Activated CD4-positive, alpha-beta memory T cell treated with anti-CD3 and anti-CD28 coated beads, Interleukin-2, amount 10 ng/mL, durations not matched to agents 7 days and 5 days (primary cell): ENCODE measurements at regions of chr5 and their contacts with region 1.

Region 1: GRCh38 chr5:157582731-157583620 is 7.4 kb upstream of the ADAM19 start:
- DNase-seq: no peak
- H3K4me3 Mint-ChIP-seq: peak overlapping the region; percentile 30
- H3K27ac Mint-ChIP-seq: peak overlapping the region; percentile 67
- H3K4me1 Mint-ChIP-seq: peaks cover 53% of the 10 kb centered on the region
- H3K27me3 Mint-ChIP-seq: no peaks in the 10 kb centered on the region

Region 2: DNA sequence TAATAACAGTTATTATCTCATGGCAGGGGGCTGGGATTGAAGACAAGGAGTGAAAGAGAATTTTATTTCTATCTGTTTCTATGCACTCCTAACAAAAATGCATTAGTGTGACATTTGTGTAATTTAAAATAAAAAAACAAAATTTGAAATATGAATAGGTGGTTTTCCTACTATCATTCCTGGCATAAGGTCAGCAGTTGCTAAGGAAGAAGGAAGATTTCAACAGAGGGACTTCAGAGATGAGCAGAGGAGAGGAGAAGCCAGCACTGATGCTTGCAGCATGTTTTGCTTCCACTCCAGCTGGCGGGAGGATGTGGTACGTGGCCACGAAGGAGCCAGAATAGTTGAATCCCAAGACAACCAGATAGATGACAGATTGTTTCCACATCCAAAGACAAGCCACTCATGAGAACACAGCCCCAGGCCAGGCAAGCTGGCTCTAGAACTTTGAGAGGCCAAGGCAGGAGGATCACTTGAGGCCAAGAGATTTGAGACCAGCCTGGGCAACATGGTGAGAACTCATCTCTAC is 635.1 kb before region 1 on chr5:
- CTCF ChIA-PET with region 1: no interaction called
- POLR2A ChIA-PET with region 1: no interaction called
- DNase-seq: peak; percentile 66
- H3K4me3 Mint-ChIP-seq: no peak overlapping the region
- H3K27ac Mint-ChIP-seq: no peak overlapping the region
- H3K4me1 Mint-ChIP-seq: peaks cover 20% of the 10 kb centered on the region
- H3K27me3 Mint-ChIP-seq: peaks cover 2% of the 10 kb centered on the region

Region 3: DNA sequence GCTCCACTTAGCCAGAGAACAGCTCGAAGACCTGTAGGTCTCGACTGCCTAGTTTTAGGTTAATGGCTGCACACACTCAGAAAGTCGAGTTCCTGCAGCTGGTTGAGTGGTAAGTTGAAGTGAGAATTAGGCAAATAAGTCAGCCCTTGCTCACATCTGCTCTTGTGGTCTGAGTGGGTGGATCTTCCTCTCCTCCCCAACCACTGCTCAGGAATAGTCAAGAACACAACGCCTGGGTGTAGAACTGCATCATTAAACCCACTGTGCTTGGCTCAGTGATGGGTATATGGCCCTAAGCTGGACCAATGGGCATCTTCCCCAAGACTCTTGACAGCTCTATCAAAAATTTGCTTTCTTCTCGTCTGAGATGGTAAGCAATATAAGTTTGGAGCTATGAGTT is 13.5 kb after region 1 on chr5:
- CTCF ChIA-PET with region 1: interaction called, 11 read pairs
- POLR2A ChIA-PET with region 1: interaction called, 80 read pairs
- DNase-seq: peak; percentile 72
- H3K4me3 Mint-ChIP-seq: peak overlapping the region; percentile 23
- H3K27ac Mint-ChIP-seq: peak overlapping the region; percentile 87
- H3K4me1 Mint-ChIP-seq: peaks cover 96% of the 10 kb centered on the region
- H3K27me3 Mint-ChIP-seq: no peaks in the 10 kb centered on the region

Region 4: GRCh38 chr5:157624144-157624543 is 41.2 kb after region 1 on chr5:
- CTCF ChIA-PET with region 1: no interaction called
- POLR2A ChIA-PET with region 1: no interaction called
- DNase-seq: no peak
- H3K4me3 Mint-ChIP-seq: no peak overlapping the region
- H3K27ac Mint-ChIP-seq: no peak overlapping the region
- H3K4me1 Mint-ChIP-seq: no peaks in the 10 kb centered on the region
- H3K27me3 Mint-ChIP-seq: peaks cover 15% of the 10 kb centered on the region